ENCODE measurements at regions of chr19 and their contacts with region 1.

Region 1: DNA sequence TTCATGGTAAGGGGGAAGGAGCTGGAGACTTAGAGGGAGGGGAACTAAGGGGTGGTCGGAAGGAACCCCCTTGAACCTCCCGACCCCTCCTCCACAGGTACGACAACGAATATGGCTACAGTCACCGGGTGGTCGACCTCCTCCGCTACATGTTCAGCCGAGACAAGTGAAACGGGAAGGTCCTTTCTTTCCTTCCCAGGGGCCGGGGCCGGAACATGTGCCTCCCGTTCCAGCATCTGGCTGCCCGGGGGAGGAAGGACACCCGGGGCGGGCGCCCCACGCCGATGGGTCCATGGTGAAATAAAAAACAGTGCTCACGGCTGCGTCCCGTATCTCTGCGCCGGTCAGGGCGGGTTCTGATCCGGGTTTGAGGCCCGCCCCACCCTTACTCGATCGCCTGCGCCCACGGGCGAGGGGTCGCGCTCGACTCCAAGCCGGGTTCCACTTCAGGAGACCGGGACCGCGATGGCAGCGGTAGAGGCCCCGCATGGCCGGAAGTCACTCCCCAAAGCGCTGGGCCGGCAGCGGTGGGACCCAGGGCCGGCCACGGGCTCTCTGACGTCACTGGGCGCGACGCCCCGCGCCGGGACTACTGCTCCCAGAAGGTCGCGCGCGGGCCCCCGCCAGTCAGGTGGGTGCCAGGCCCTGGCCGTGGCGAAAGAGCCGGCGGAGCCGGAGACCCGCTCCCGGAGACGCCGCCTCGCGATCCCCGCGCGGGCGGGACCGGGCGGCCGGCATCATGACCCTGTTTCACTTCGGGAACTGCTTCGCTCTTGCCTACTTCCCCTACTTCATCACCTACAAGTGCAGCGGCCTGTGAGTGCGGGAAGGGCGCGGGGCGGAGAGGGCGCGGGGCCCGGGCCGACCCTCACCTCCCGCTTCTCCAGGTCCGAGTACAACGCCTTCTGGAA is at the start of gene TMEM147:
- DNase-seq: peak; percentile 90 to 98 (median 94)
- ATAC-seq: peak; percentile 89 to 97 (median 92)
- H3K4me3 ChIP-seq: peak within 1 kb of the TSS; percentile 49 to 99 (median 82)
- H3K27ac ChIP-seq: peak within 1 kb of the TSS; percentile 36 to 70 (median 53)
- H3K4me1 ChIP-seq: peaks cover 0 to 17% (median 4%) of the 10 kb centered on the region in 3 donors
- H3K27me3 ChIP-seq: no peaks in the 10 kb centered on the region
- CTCF ChIP-seq: no peak
- total RNA-seq, gene TMEM147: 44.3 to 63.9 (median 51.5) TPM

Region 2: DNA sequence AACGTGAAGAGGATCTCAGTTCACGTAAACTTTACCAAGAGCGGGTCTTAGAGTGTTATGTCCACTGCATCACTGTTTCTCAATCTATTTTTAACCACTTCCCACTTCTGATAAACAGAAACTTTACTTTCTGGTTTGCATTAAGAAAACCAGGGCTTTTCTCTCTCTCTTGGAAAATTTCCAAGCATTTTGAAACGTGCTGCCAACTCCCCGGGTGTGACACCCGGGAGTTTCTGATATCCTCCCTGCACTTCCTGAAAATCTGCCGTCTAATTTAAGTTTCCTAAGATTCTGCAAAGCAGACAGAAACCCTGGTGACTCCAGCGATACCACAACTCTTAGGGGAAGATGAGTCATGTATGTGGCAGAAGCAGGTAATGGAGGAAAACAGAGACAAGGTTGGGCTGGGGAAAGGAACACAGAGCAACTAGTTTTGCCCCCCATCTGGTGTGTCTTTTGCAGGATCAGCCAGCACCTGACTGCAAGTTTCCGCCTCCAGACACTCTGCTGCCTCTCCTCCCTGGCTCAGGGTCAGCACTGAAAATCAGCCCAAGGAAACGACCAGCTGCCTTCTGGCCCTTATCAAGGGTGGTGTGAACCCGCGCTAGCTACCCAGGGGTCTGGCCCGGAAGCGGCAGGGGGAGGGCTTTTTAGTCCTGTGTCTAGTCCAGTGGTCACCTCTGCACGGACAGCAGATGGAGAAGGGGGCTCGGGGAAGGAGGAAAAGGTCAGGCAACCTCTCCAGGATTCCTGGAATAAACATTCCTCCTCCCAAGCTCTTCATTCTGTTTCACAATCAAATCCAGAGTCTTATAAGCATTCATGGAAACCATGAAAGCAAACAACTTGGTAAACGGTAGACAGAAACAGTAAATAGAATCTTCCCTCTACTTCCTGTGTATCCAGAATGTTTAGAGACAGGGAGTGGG is 108.5 kb before region 1 on chr19:
- intact Hi-C with region 1: no loop called
- DNase-seq: peak in 3 of 6 donors; percentile 42 to 46 (median 46)
- ATAC-seq: peak in 3 of 4 donors; percentile 21 to 58 (median 47)
- H3K4me3 ChIP-seq: peak overlapping the region in 1 of 4 donors; percentile 2
- H3K27ac ChIP-seq: peak overlapping the region; percentile 25 to 69 (median 50)
- H3K4me1 ChIP-seq: peaks cover 29 to 42% (median 40%) of the 10 kb centered on the region in 3 donors
- H3K27me3 ChIP-seq: no peaks in the 10 kb centered on the region
- CTCF ChIP-seq: no peak

Region 3: GRCh38 chr19:35585848-35586247 is 40.6 kb after region 1 on chr19 and contains the start of gene PMIS2:
- intact Hi-C with region 1: loop called in 2 of 3 experiments (anchors 5 to 10 kb)
- DNase-seq: no peak
- ATAC-seq: peak in 1 of 4 donors; percentile 30
- H3K4me3 ChIP-seq: no peak within 1 kb of the TSS
- H3K27ac ChIP-seq: no peak within 1 kb of the TSS
- H3K4me1 ChIP-seq: no peaks in the 10 kb centered on the region
- H3K27me3 ChIP-seq: no peaks in the 10 kb centered on the region
- CTCF ChIP-seq: no peak
- total RNA-seq, gene PMIS2: not detected

Region 4: GRCh38 chr19:35592226-35592625 is 47.0 kb after region 1 on chr19:
- intact Hi-C with region 1: loop called in 2 of 3 experiments (anchors 5 to 10 kb)
- DNase-seq: peak in 3 of 6 donors; percentile 36 to 60 (median 43)
- ATAC-seq: peak; percentile 84 to 98 (median 94)
- H3K4me3 ChIP-seq: no peak overlapping the region
- H3K27ac ChIP-seq: no peak overlapping the region
- H3K4me1 ChIP-seq: no peaks in the 10 kb centered on the region
- H3K27me3 ChIP-seq: no peaks in the 10 kb centered on the region
- CTCF ChIP-seq: peak; percentile 23 to 60 (median 42)